H1 (cell line): ENCODE measurements at regions of chr7 and their contacts with region 1.

Region 1: DNA sequence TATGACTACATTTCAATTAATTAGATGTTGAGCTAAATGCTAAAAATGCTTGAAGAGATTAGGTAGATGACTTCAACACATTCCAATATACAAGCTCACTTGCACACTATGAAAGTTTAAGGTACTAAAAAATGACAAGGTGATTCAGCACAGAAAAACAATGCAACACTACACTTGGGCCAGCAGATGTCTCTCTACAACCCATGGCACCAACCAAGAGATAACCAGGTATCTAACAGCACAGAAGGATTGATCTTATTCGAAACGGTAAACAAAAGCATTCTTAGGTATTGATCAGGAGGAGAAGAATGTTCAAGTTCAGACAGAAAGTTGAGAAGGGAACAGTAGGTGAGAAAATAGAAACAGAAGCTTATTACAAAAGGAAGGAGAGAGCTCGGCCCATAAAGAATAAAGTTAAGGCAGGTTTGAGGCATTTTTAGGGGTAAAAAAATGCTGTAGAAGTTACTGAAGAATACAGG is 248.2 kb upstream of the KLF14 start:
- DNase-seq: no peak
- H3K4me3 ChIP-seq: no peak overlapping the region
- H3K27ac ChIP-seq: no peak overlapping the region
- H3K4me1 ChIP-seq: no peaks in the 10 kb centered on the region; a peak in 1 of 7 replicates
- H3K27me3 ChIP-seq: no peaks in the 10 kb centered on the region
- CTCF ChIP-seq: peak in 2 of 3 experiments; percentile 69 to 83; a peak in 3 of 4 replicates
- EP300 ChIP-seq: no peak
- POLR2A ChIP-seq: no peak
- RAD21 ChIP-seq: peak; percentile 78 to 79

Region 2: GRCh38 chr7:130929896-130930659 is 52.1 kb before region 1 on chr7:
- CTCF ChIA-PET with region 1: interaction called, 11 read pairs
- POLR2A ChIA-PET with region 1: no interaction called
- DNase-seq: no peak
- H3K4me3 ChIP-seq: no peak overlapping the region
- H3K27ac ChIP-seq: no peak overlapping the region
- H3K4me1 ChIP-seq: peaks cover 0 to 4% (median 0%) of the 10 kb centered on the region in 4 experiments; a peak in 2 of 7 replicates
- H3K27me3 ChIP-seq: no peaks in the 10 kb centered on the region
- CTCF ChIP-seq: no peak
- EP300 ChIP-seq: no peak
- POLR2A ChIP-seq: no peak
- RAD21 ChIP-seq: no peak

Region 3: DNA sequence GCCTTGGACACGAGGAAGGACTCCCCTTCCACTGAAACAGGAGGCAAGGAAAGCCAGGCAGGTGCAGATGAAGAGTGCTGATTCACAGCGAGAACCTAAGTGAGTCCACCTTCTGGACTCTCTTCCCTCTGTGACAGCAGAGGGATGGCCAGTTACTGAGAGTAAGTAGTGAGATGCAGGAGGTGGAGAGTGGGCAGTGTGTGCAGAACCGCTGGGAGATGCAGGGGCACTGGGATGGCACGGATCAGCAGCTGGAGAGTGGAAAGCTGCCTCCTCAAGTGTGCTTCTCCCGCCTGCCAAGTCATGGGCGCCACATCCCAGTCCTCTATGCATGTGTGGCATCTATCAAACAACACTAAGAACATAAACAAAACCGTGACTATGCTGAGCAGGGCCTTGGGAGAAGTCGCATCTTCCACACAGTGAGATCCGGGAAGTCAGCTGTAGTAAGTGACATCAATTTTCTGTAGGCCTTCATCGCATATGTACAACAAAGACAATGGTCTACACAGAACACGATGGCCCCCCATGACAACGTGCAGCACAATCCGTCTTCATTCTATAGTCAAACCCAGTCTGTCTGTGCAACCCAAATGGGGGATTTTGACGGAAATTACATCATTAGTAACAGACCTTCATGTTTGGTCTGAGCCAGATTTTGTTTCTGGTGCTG is 30.8 kb before region 1 on chr7:
- CTCF ChIA-PET with region 1: interaction called, 12 read pairs
- POLR2A ChIA-PET with region 1: no interaction called
- DNase-seq: no peak
- H3K4me3 ChIP-seq: no peak overlapping the region
- H3K27ac ChIP-seq: no peak overlapping the region
- H3K4me1 ChIP-seq: peaks cover 0 to 7% (median 3%) of the 10 kb centered on the region in 4 experiments; a peak in 5 of 7 replicates
- H3K27me3 ChIP-seq: no peaks in the 10 kb centered on the region
- CTCF ChIP-seq: no peak
- EP300 ChIP-seq: no peak
- POLR2A ChIP-seq: no peak
- RAD21 ChIP-seq: no peak

Region 4: GRCh38 chr7:130966246-130967009 is 15.8 kb before region 1 on chr7:
- CTCF ChIA-PET with region 1: interaction called, 20 read pairs
- POLR2A ChIA-PET with region 1: interaction called, 3 read pairs
- DNase-seq: no peak
- H3K4me3 ChIP-seq: no peak overlapping the region
- H3K27ac ChIP-seq: no peak overlapping the region
- H3K4me1 ChIP-seq: peaks cover 0 to 4% (median 0%) of the 10 kb centered on the region in 4 experiments; a peak in 1 of 7 replicates
- H3K27me3 ChIP-seq: no peaks in the 10 kb centered on the region
- CTCF ChIP-seq: no peak
- EP300 ChIP-seq: no peak
- POLR2A ChIP-seq: no peak
- RAD21 ChIP-seq: no peak

Region 5: DNA sequence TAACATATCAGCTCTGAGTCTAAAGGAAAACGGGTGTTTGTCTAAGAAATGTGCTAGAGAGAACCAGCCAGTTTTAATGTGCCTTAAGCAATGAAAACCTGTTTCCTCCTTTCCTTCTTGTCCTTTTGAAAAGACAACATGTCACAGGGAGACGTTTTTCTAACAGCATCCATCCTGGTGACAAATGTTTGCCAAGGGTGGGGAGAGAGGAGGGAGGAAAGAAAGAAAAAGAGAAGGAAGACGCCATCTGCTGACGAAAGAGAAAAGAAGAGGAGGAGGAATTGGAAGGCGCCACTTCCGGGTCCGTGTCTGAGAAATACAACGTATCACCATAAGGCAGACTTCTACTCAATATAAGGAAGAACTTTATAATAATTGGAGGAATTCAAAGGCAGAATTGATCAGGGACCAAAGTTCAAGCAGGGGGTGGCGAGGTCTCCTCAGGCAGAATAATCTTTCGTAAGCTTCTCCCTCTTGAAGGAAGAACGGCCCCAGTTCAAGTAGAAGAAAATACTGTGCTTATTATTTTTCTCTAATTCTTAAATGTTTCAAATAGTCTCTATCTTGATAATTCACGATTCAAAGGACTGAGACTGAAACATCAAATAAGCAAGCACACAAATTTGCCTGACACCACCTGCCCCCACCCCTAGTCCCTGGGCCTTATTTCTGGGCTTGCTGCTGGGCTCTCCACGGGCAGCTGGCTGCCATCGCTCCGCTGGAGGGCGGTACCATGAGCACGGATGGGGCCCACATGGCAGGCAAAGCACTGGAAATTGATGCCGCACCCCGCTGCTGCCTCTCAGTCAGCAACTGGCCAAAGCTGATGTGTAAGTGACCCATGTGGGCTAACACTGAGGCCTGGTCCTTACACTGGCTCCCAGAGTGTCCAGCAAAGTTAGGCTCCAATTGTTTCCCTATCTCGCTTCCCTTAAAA is 25.5 kb after region 1 on chr7:
- CTCF ChIA-PET with region 1: interaction called, 55 read pairs
- POLR2A ChIA-PET with region 1: no interaction called
- DNase-seq: peak in 1 of 2 experiments; percentile 67
- H3K4me3 ChIP-seq: 0 out of 8 replicates have a peak overlapping the region, but pooled peaks of 1 of the 4 experiments have one; percentile 18
- H3K27ac ChIP-seq: no peak overlapping the region
- H3K4me1 ChIP-seq: peaks cover 0 to 4% (median under 1%) of the 10 kb centered on the region in 4 experiments; a peak in 6 of 7 replicates
- H3K27me3 ChIP-seq: no peaks in the 10 kb centered on the region; a peak in 1 of 7 replicates
- CTCF ChIP-seq: peak; percentile 29 to 68 (median 60)
- EP300 ChIP-seq: no peak
- POLR2A ChIP-seq: no peak
- RAD21 ChIP-seq: peak; percentile 70 to 74

Region 6: GRCh38 chr7:131040467-131040932 is 58.3 kb after region 1 on chr7:
- CTCF ChIA-PET with region 1: interaction called, 23 read pairs
- POLR2A ChIA-PET with region 1: no interaction called
- DNase-seq: peak in 1 of 2 experiments; percentile 62
- H3K4me3 ChIP-seq: no peak overlapping the region
- H3K27ac ChIP-seq: no peak overlapping the region
- H3K4me1 ChIP-seq: peaks cover 3 to 11% (median 7%) of the 10 kb centered on the region in 4 experiments; a peak in 4 of 7 replicates
- H3K27me3 ChIP-seq: no peaks in the 10 kb centered on the region
- CTCF ChIP-seq: peak in 2 of 3 experiments; percentile 79 to 88; a peak in 3 of 4 replicates
- EP300 ChIP-seq: no peak
- POLR2A ChIP-seq: no peak
- RAD21 ChIP-seq: peak; percentile 87 to 89